Uterus (tissue), 4 donors: ENCODE measurements at regions of chr9 and their contacts with region 1.

Region 1: DNA sequence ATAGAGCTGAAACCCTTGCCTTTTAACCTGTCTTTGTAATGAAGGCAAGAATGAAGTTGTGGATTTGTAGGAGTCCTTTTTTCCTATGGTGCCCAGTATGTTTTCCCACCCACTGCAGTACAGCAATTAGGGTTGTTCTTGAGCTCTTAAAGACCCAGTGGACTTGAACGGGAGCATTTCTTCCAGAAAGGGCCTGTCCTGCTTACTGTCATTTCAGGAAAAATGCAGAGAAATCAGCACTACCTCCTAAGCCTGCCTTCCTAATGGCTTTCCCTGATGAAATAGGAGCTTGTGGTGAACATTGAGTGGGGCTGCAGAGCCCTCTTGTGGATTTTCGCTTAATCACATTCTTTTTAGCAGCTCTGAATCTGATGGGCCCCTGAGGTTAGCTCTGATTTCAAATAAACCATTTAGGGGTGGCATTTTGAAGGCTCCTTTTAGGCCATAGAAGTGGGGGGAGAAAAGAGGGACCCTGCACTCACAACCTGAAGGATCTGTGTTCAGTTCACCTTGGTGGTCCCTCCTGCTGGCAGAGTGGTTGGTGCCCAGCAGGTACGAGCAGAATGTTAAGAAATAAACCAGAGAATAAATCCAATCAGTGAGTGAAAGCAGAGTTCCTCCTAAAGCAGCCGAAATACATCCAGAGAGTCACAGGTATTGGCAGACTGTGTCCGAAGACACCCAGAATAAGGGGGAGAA is 188.0 kb upstream of the KLF9 start:
- DNase-seq: peak; percentile 64 to 76
- H3K4me3 ChIP-seq: no peak overlapping the region
- H3K27ac ChIP-seq: peak overlapping the region; percentile 93
- H3K4me1 ChIP-seq: peaks cover 0 to 12% of the 10 kb centered on the region in 2 donors
- H3K27me3 ChIP-seq: no peaks in the 10 kb centered on the region
- CTCF ChIP-seq: peak; percentile 82 to 96 (median 89)
- POLR2A ChIP-seq: no peak

Region 2: GRCh38 chr9:69971643-69972449 is 630.6 kb before region 1 on chr9:
- intact Hi-C with region 1: loop called (anchors 10 kb)
- DNase-seq: peak; percentile 83 to 85
- H3K4me3 ChIP-seq: no peak overlapping the region
- H3K27ac ChIP-seq: peak overlapping the region; percentile 42 to 43
- H3K4me1 ChIP-seq: no peaks in the 10 kb centered on the region
- H3K27me3 ChIP-seq: no peaks in the 10 kb centered on the region
- CTCF ChIP-seq: peak; percentile 81 to 90 (median 89)
- POLR2A ChIP-seq: no peak

Region 3: DNA sequence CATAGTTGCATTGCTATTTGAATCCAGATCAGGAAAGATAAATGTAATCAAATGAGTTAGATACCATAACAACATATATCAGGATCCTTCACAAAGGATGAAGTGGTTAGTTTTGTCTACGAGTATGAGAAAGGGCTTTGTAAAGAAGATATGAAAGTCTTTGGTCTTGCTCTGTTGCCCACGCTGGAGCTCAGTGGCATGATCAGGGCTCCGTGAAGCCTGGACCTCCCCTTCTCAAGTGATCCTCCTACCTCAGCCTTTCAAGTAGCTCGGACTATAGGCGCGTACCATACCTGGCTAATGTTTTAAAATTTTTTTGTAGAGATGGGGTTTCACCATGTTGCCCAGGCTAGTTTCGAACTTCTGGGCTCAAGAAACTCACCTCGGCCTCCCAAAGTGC is 341.9 kb before region 1 on chr9:
- intact Hi-C with region 1: loop called (anchors 10 kb)
- DNase-seq: no peak
- H3K4me3 ChIP-seq: peak overlapping the region in 1 of 2 donors; percentile 86
- H3K27ac ChIP-seq: no peak overlapping the region
- H3K4me1 ChIP-seq: peaks cover 14 to 22% of the 10 kb centered on the region in 2 donors
- H3K27me3 ChIP-seq: no peaks in the 10 kb centered on the region
- CTCF ChIP-seq: no peak
- POLR2A ChIP-seq: no peak

Region 4: DNA sequence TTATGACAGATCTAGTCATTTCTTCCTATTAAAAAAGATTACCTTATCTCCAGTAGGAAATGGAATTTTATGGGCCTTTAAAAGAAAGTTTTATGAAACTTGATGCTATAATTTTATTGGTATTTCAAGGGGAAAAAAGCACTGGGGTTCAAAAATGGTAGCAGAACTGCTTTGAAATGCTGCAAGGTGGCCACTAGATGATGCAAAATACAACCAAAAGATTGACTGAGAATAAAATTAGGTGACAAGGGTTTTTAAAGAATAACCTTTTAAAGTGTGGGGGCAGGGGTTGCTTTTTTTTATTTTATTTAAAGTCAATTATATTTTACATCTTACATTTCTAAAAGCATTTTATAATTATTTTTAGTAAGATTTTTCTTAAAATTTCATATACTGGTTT is 249.7 kb before region 1 on chr9:
- intact Hi-C with region 1: loop called (anchors 10 kb)
- DNase-seq: no peak
- H3K4me3 ChIP-seq: no peak overlapping the region
- H3K27ac ChIP-seq: peak overlapping the region; percentile 32 to 58
- H3K4me1 ChIP-seq: no peaks in the 10 kb centered on the region
- H3K27me3 ChIP-seq: no peaks in the 10 kb centered on the region
- CTCF ChIP-seq: peak; percentile 61 to 75 (median 68)
- POLR2A ChIP-seq: no peak

Region 5: GRCh38 chr9:70413798-70414775 is 188.4 kb before region 1 on chr9 and contains the start of gene KLF9:
- intact Hi-C with region 1: loop called (anchors 5 kb)
- DNase-seq: peak; percentile 93 to 98
- H3K4me3 ChIP-seq: peak within 1 kb of the TSS; percentile 72 to 97
- H3K27ac ChIP-seq: peak within 1 kb of the TSS; percentile 100
- H3K4me1 ChIP-seq: peaks cover 0 to 6% of the 10 kb centered on the region in 2 donors
- H3K27me3 ChIP-seq: no peaks in the 10 kb centered on the region
- CTCF ChIP-seq: no peak
- POLR2A ChIP-seq: peak; percentile 96 to 97
- total RNA-seq, gene KLF9: 19.1 to 146 (median 98.7) TPM

Region 6: DNA sequence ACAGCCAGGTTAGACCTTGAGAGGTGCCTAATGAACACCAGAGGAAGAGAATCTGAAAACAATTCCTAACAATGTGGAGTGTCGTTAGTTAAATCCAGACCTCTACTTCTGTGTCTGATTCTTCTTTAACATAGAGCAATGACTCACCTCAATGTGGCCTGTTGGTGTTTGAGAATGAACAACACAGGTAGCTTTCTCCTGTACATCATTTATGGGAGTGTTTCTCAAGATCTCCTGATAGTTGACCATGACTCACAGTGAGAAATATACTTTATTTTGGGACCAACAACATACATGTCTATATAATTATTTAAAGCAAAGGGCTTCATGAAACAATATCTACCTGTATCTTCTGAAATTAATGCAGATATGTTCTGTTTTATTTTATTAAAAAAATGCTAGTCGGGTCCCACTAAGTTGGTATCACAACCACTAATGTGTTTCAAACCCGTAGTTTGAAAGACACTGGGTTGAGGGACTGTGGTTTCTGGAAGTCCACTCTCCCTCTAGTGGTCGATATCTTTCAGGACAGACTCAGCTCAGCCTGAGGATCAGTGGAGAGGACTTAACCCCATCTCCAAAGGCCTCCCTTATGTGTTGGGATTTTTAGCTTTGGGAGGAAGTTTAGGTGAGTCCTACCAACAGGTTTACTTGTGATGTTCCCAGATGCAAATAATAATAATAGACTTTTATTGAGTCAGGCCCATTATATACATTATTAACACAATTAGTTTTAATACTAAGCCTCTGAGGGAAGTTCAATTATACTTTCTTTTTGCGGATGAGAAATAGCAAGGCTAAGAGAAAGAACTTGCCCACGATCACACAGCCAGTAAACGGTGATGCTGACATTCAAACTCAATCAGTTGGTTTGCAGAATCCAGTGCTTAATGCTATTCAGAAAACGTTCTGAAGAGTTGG is 118.0 kb before region 1 on chr9:
- intact Hi-C with region 1: loop called (anchors 5 kb)
- DNase-seq: peak in 1 of 2 donors; percentile 66
- H3K4me3 ChIP-seq: no peak overlapping the region
- H3K27ac ChIP-seq: peak overlapping the region; percentile 90 to 91
- H3K4me1 ChIP-seq: peaks cover 14 to 28% of the 10 kb centered on the region in 2 donors
- H3K27me3 ChIP-seq: no peaks in the 10 kb centered on the region
- CTCF ChIP-seq: peak; percentile 50 to 79 (median 76)
- POLR2A ChIP-seq: no peak